ENCODE measurements at regions of chr18 and their contacts with region 1.

Region 1: DNA sequence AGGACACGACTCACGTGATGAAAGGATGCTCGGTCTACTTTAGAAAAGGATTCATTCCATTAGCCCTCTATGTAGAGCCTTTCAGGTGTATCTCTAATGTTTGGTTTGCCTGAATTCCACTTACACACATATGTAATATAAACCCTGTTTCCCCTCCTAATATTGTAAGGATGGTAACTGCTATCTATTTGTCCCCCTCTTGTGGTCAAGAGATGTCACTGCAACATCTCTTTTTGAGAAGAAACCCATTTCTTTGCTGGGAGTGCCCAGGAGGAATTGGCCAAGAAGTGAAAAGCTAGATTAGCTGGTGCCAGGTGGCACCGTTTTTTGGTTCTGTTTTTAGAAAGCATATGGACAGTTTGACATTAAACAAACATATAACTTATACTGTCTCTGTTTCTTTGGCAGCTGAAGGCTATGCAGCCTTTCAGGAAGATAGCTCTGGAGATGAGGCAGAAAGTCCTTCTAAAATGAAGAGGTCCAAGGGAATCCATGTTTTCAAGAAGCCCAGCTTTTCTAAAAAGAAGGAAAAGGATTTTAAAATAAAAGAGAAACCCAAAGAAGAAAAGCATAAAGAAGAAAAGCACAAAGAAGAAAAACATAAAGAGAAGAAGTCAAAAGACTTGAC is 41.2 kb downstream of the RALBP1 start:
- ATAC-seq: peak in 3 of 8 experiments; percentile 46 to 53 (median 50)
- H3K4me3 ChIP-seq: no peak overlapping the region
- H3K27ac ChIP-seq: no peak overlapping the region
- H3K4me1 ChIP-seq: no peaks in the 10 kb centered on the region

Region 2: GRCh38 chr18:8835521-8835953 is 681.0 kb before region 1 on chr18:
- in situ Hi-C with region 1: no loop called
- ATAC-seq: no peak
- H3K4me3 ChIP-seq: no peak overlapping the region
- H3K27ac ChIP-seq: no peak overlapping the region
- H3K4me1 ChIP-seq: peaks cover 0 to 6% of the 10 kb centered on the region in 2 donors

Region 3: DNA sequence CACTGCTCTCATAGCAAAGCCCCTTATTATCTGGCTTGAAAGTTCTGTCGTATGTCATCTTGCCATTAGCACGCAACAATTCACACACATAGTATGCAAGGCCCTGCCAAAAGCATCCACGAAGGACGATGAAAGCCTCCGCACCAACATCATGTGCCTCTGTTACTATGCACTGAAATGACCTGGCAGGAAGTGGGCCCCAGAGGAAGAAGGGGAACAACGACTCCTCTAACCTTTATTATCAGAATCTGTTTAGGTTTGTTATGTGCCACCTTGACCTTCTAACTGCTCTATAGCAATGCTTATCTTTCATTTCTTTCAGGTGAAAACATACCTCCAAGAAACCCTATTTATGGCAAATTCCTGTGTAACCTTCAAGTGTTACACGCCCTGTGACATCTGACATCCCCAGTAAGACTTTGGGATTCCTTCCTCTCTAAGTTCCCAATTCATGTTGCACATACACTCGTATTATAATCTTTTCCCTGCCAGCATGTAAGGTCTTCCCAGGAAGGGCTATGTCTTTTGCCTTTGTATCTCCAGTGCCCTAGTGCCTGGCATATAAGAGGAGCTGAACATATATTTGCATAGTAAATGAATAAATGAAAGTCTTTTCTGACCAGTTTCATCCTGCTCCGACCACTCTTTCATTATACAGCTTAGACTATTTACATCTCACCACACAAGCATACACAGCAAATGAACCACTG is 421.1 kb before region 1 on chr18:
- in situ Hi-C with region 1: loop called in 1 of 9 experiments (anchors 25 kb)
- ATAC-seq: peak in 7 of 8 experiments; percentile 46 to 96 (median 76)
- H3K4me3 ChIP-seq: no peak overlapping the region
- H3K27ac ChIP-seq: no peak overlapping the region
- H3K4me1 ChIP-seq: peaks cover 13 to 14% of the 10 kb centered on the region in 2 donors